Mammary epithelial cell (primary cell): ENCODE measurements at regions of chr7 and their contacts with region 1.

Region 1: GRCh38 chr7:116588641-116589594 is 64.1 kb downstream of the CAV1 start:
- DNase-seq: peak; percentile 44
- H3K4me3 ChIP-seq: no peak overlapping the region
- H3K27ac ChIP-seq: peak overlapping the region; percentile 32
- H3K4me1 ChIP-seq: peaks cover 16% of the 10 kb centered on the region
- H3K27me3 ChIP-seq: no peaks in the 10 kb centered on the region
- CTCF ChIP-seq: peak; percentile 45 to 57

Region 2: DNA sequence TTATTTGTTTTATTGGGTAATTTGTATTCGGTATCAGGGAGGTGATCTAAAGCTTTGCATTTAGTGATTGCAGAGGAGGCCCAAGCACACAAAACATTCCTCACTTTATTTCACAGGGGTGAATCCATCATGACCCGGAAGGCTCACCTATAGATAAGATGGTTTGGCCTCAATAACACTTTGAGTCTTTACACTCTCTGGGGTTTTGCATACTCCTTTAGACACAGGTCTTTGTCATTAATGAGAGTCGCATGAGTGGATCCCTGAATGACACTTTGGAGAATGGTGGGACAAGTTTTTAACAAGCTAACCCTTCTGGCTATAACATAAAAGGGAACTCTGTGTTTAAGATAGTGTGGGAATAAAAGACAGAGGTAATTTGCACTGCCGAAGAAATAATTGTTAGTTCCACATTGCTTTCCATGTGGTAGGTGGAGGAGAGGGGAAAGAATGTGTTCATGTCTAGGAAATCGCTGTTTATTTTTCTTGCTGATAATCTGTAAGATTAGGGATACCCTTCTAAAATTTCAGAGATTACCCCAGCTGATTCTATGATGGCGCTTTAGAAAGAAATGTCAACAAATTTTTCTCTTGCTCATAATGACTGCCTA is 1014.1 kb before region 1 on chr7:
- CTCF ChIA-PET with region 1: no interaction called
- dilution Hi-C with region 1: no loop called
- in situ Hi-C with region 1: no loop called
- intact Hi-C with region 1: no loop called
- DNase-seq: no peak
- H3K4me3 ChIP-seq: no peak overlapping the region
- H3K27ac ChIP-seq: no peak overlapping the region
- H3K4me1 ChIP-seq: no peaks in the 10 kb centered on the region
- H3K27me3 ChIP-seq: no peaks in the 10 kb centered on the region
- CTCF ChIP-seq: no peak

Region 3: GRCh38 chr7:116173051-116174028 is 415.6 kb before region 1 on chr7:
- CTCF ChIA-PET with region 1: interaction called, 4 read pairs
- dilution Hi-C with region 1: no loop called
- in situ Hi-C with region 1: no loop called
- intact Hi-C with region 1: loop called (anchors 1 kb)
- DNase-seq: peak; percentile 54
- H3K4me3 ChIP-seq: no peak overlapping the region
- H3K27ac ChIP-seq: no peak overlapping the region
- H3K4me1 ChIP-seq: peaks cover 25% of the 10 kb centered on the region
- H3K27me3 ChIP-seq: no peaks in the 10 kb centered on the region
- CTCF ChIP-seq: peak; percentile 35 to 46

Region 4: GRCh38 chr7:116340943-116341907 is 247.7 kb before region 1 on chr7:
- CTCF ChIA-PET with region 1: no interaction called
- dilution Hi-C with region 1: no loop called
- in situ Hi-C with region 1: no loop called
- intact Hi-C with region 1: loop called (anchors 5 kb)
- DNase-seq: no peak
- H3K4me3 ChIP-seq: no peak overlapping the region
- H3K27ac ChIP-seq: no peak overlapping the region
- H3K4me1 ChIP-seq: peaks cover 14% of the 10 kb centered on the region
- H3K27me3 ChIP-seq: no peaks in the 10 kb centered on the region
- CTCF ChIP-seq: peak; percentile 28 to 57

Region 5: GRCh38 chr7:116499168-116500077 is 89.5 kb before region 1 on chr7 and contains the start of gene CAV2:
- CTCF ChIA-PET with region 1: no interaction called
- dilution Hi-C with region 1: no loop called
- in situ Hi-C with region 1: no loop called
- intact Hi-C with region 1: loop called (anchors 2 kb)
- DNase-seq: peak; percentile 96
- H3K4me3 ChIP-seq: peak within 1 kb of the TSS; percentile 59 to 98 (median 80)
- H3K27ac ChIP-seq: peak within 1 kb of the TSS; percentile 99
- H3K4me1 ChIP-seq: peaks cover 34% of the 10 kb centered on the region
- H3K27me3 ChIP-seq: no peaks in the 10 kb centered on the region
- CTCF ChIP-seq: no peak
- total RNA-seq, gene CAV2: 253 to 385 TPM

Region 6: DNA sequence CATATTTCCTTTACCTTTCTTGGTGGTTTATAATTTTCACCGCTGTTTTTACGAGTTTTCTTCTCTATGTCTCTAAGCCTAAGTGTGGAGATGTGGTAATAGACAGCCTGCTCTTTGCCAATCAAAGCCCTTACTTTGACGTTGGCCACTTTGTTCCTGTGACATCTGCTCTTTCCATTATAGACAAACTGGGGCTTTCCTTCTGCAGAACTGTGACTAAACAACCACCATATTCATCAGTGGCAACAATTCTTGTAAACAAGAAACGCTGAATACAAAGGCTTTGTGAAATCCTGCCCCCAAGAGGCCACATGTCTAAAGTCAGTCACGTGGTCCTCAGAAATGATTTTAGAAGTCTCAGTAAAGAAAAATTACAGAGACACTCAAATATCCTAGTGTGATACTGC is 213.8 kb after region 1 on chr7:
- CTCF ChIA-PET with region 1: no interaction called
- dilution Hi-C with region 1: no loop called
- in situ Hi-C with region 1: loop called (anchors 5 kb)
- intact Hi-C with region 1: no loop called
- DNase-seq: peak; percentile 80
- H3K4me3 ChIP-seq: no peak overlapping the region
- H3K27ac ChIP-seq: peak overlapping the region; percentile 89
- H3K4me1 ChIP-seq: peaks cover 31% of the 10 kb centered on the region
- H3K27me3 ChIP-seq: no peaks in the 10 kb centered on the region
- CTCF ChIP-seq: peak; percentile 57 to 65

Region 7: GRCh38 chr7:116876664-116877442 is 287.9 kb after region 1 on chr7:
- CTCF ChIA-PET with region 1: no interaction called
- dilution Hi-C with region 1: no loop called
- in situ Hi-C with region 1: no loop called
- intact Hi-C with region 1: no loop called
- DNase-seq: no peak
- H3K4me3 ChIP-seq: no peak overlapping the region
- H3K27ac ChIP-seq: no peak overlapping the region
- H3K4me1 ChIP-seq: peaks cover 8% of the 10 kb centered on the region
- H3K27me3 ChIP-seq: no peaks in the 10 kb centered on the region
- CTCF ChIP-seq: no peak